Activated CD4-positive, alpha-beta memory T cell treated with anti-CD3 and anti-CD28 coated beads, Interleukin-2, amount 10 ng/mL, durations not matched to agents 7 days and 5 days (primary cell): ENCODE measurements at regions of chr5 and their contacts with region 1.

Region 1: DNA sequence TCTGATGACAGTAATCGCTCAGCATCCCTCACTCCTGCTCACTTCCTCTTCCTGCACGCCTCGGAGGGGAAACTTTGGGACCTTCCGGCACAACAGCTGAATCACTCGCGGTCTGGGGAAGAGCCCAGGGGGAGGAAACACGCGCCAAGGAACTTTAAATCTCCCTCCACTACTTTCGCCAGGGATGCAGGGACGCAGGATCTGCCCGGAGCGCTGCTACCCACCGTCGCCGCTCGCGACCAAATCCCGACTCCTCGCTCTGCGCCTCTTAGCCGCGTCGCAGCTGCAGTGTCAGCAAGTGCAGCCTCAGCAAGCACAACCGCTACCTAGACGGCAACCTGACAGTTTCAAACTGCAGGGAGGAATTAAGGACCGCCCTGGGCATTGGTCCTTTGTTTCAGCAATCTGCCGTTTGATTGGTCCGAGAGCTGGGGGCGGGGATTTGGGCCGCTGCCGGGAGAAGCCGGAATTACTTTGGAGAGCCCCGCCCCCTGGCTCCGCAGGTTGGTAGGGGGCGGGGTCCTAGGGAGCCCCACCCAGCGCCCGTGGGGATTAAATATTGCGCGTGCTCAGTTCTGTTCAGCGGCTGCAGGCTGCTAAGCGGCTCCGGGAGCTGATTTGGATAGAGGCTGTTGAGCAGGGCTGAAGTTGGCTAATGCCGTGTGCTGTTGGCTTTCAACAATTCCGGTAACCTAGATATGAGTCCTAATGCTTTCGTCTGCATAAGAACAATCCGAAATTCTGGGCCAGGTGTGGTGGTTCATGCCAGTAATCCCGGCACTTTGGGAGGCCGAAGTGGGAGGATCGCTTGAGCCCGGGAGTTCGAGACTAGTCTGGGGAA is at the start of gene POC5:
- DNase-seq: peak; percentile 99
- H3K4me3 Mint-ChIP-seq: peak within 1 kb of the TSS; percentile 95
- H3K27ac Mint-ChIP-seq: peak within 1 kb of the TSS; percentile 99
- H3K4me1 Mint-ChIP-seq: peaks cover 34% of the 10 kb centered on the region
- H3K27me3 Mint-ChIP-seq: peaks cover 11% of the 10 kb centered on the region
- total RNA-seq, gene POC5: 21.5 TPM

Region 2: DNA sequence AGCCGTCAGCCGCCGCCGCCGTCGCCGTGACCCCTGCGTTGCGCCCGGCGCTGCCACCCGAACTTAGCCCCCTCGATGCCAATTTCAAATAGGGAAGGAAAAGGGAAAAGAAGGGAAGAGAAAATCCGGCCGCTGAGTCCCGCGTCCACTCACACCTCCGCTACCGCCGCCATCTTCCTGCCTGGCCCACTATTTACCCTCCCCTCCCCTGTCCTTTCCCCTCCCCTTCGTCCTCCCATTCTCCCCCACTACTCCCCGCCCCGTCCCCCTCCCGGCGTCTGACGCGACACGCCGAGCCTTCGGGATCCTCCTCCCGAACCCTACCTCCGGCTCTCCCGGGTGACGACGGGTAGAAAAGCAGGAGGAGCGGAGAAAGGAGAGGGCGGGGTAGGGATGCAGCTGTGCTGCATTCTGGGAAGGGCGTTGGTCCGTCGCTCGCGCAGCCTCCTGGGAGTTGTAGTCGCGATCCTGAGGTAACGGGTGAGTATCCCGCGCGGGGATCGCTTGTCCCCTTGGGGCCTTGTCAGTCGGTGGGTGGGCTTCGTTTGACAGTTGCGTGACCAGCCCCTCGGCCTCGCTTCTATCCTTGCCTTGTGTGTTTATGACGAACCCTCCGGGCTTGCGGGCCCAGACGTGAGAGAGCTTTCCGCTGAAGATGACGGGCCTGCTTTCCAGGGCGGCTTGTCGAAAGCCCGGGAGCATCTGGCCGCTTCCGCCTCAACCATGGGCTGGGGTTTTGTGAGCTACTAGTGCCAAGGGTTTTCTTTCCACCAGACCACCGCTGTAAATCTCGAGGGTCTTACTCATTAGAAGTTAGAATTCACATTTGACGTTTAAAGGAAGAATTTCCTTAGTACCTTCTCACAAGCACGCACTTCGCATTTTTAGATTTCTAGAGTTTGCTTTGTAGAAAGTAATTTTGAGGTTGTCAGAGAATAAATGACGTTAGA is 205.6 kb before region 1 on chr5 and contains the starts of genes CERT1 and POLK:
- CTCF ChIA-PET with region 1: no interaction called
- POLR2A ChIA-PET with region 1: interaction called, 11 read pairs
- DNase-seq: peak; percentile 98
- H3K4me3 Mint-ChIP-seq: peak within 1 kb of the TSS; percentile 95
- H3K27ac Mint-ChIP-seq: peak within 1 kb of the TSS; percentile 86
- H3K4me1 Mint-ChIP-seq: peaks cover 56% of the 10 kb centered on the region
- H3K27me3 Mint-ChIP-seq: no peaks in the 10 kb centered on the region
- total RNA-seq, gene CERT1: 36.2 to 39.7 TPM
- total RNA-seq, gene POLK: 28.3 to 28.7 TPM

Region 3: DNA sequence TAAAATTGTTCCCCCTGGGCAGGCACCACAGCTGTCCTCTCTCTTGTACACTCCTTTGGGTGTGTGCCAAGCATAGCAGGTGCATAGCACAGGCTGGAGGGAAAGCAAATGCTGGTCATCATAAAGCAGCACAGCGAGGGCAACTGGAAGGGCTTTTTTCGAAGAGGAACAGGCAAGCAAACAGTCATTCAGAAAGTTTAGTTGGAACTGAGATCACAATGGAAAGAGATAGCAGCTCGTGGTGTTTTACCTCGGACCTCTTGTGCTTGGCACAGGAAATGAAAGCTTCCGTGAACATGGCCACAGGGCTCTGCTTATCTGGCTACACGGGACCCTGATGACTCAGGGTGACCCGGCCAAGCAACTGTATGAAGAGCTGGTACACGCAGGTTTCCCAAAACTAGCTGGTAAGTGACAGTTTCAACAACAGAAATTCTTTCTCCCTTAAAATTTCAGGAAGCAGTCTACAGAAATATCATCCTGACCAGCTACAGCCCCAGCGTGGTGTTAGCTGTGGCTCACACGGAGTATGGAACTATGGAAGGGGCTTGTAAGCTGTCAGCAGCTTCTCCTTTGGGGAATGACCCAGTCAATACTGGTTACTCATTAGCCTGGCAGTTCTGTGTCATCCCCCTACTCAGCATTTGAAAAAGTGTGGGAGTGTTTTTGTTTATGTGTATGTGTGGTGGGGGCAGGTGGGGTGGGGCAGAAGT is 48.2 kb before region 1 on chr5:
- CTCF ChIA-PET with region 1: no interaction called
- POLR2A ChIA-PET with region 1: interaction called, 11 read pairs
- DNase-seq: peak; percentile 73
- H3K4me3 Mint-ChIP-seq: peak overlapping the region; percentile 68
- H3K27ac Mint-ChIP-seq: peak overlapping the region; percentile 83
- H3K4me1 Mint-ChIP-seq: peaks cover 35% of the 10 kb centered on the region
- H3K27me3 Mint-ChIP-seq: no peaks in the 10 kb centered on the region

Region 4: GRCh38 chr5:75681125-75681830 is 36.0 kb before region 1 on chr5:
- CTCF ChIA-PET with region 1: no interaction called
- POLR2A ChIA-PET with region 1: interaction called, 12 read pairs
- DNase-seq: no peak
- H3K4me3 Mint-ChIP-seq: no peak overlapping the region
- H3K27ac Mint-ChIP-seq: no peak overlapping the region
- H3K4me1 Mint-ChIP-seq: peaks cover 16% of the 10 kb centered on the region
- H3K27me3 Mint-ChIP-seq: no peaks in the 10 kb centered on the region

Region 5: DNA sequence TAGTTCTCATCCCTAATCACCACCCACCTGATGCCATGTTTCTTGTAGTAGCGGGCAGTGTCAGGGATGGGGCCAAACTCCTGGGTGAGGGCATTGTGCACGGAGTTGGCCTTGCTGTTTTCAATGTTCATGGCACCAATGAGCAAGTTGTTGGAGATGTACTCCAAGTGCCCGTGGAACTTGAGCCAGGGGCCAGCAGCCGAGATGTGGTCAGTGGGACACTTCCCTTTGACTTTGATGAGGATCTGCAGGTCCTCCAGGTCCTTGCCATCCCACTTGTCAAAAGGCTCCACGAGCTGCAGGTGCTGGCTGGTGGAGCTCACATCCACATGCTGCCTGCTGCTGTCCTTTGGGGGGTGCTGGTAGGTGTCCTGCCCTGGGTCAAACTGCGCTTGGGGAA is 203.7 kb after region 1 on chr5:
- CTCF ChIA-PET with region 1: no interaction called
- POLR2A ChIA-PET with region 1: no interaction called
- DNase-seq: no peak
- H3K4me3 Mint-ChIP-seq: no peak overlapping the region
- H3K27ac Mint-ChIP-seq: no peak overlapping the region
- H3K4me1 Mint-ChIP-seq: no peaks in the 10 kb centered on the region
- H3K27me3 Mint-ChIP-seq: peaks cover 24% of the 10 kb centered on the region